Colonic mucosa (tissue), 4 donors: ENCODE measurements at regions of chr16 and their contacts with region 1.

Region 1: GRCh38 chr16:58661199-58661830 is 23.3 kb downstream of the SLC38A7 start:
- DNase-seq: peak; percentile 49
- H3K4me3 ChIP-seq: no peak overlapping the region
- H3K27ac ChIP-seq: no peak overlapping the region
- H3K4me1 ChIP-seq: no peaks in the 10 kb centered on the region
- H3K27me3 ChIP-seq: no peaks in the 10 kb centered on the region
- CTCF ChIP-seq: peak; percentile 51

Region 2: DNA sequence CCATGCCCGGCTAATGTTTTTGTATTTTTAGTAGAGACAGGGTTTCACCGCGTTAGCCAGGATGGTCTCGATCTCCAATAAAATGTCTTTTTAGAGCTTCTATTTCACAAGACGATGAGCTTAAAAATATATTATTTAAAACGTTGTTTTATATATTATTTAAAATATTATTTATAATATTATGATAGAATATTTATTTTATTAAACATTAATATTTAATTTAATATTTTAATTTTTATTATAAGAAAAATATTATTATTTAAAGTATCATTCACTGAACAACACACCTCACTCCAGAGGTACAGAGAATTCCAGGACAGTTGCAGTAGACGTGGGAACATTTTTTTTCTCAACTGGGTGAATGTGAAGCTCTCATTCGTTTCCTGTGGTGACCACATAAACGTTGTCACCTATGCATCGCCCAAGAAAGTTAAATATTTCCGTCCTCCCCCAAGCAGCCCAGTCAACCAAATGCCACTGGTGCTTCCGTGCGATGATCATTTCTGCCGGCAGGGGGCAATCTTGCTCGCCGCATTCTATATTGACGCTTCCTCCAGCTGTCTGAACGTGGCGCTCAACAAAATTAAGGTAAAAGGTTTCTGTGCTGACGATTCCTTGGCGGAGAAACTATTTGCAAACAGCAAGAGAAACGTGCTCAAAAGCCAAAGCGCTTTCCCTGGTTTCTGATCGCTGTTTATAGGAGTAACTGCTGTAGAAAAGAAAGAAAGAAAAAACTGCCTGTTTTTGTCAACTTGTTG is 324.8 kb before region 1 on chr16:
- intact Hi-C with region 1: loop called (anchors 10 kb)
- DNase-seq: peak; percentile 86
- H3K4me3 ChIP-seq: peak overlapping the region; percentile 7
- H3K27ac ChIP-seq: no peak overlapping the region
- H3K4me1 ChIP-seq: no peaks in the 10 kb centered on the region
- H3K27me3 ChIP-seq: no peaks in the 10 kb centered on the region
- CTCF ChIP-seq: peak; percentile 90

Region 3: GRCh38 chr16:58392215-58393137 is 268.8 kb before region 1 on chr16 and contains the start of gene GINS3:
- intact Hi-C with region 1: no loop called
- DNase-seq: peak; percentile 93
- H3K4me3 ChIP-seq: peak within 1 kb of the TSS; percentile 99
- H3K27ac ChIP-seq: peak within 1 kb of the TSS; percentile 70
- H3K4me1 ChIP-seq: no peaks in the 10 kb centered on the region
- H3K27me3 ChIP-seq: no peaks in the 10 kb centered on the region
- CTCF ChIP-seq: no peak
- total RNA-seq, gene GINS3: 2.5 to 11.7 TPM

Region 4: DNA sequence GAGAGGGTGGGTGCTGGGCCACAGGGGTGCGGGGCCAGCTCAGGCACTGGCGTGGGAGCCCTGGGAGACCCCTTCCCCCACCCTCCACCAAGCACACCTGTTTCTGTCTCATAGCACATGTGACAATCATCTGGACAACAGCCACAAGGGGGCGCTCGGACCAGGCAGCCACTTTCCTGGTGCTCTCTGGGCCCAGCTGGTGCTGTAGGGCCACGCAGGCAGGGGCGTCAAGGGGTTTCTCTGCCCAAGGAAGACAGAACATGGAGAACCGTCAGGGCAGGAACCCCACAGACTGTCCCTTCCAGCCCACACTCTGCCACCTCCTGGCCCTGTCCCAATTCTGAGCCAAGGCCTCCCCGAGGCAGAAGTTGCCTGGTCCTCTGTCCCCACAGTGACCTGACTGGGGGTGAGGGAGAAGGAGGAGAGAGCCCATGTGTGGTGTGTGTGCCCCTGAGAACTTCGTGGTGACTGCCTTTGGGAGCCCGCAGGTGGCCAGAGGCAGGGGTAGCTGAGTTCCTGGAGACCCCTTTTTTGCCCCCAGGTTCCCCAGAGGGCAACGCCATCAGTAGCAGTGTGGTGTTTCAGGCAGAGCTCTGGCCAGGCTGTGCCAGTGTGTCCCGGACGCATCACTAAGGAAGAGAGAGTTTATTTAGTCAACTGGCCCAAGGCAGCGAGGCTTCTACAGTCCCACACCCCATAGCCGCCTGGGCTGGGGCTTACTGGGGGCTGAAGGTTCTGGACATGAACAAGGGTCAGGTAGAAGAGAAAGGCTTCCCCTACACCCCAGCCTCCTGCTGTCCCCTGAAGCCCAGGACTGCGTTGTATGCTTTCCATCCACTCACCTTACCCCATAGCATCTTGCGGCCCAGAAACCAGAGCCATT is 149.1 kb before region 1 on chr16:
- intact Hi-C with region 1: loop called (anchors 5 kb)
- DNase-seq: peak; percentile 84
- H3K4me3 ChIP-seq: no peak overlapping the region
- H3K27ac ChIP-seq: no peak overlapping the region
- H3K4me1 ChIP-seq: peaks cover 3% of the 10 kb centered on the region
- H3K27me3 ChIP-seq: no peaks in the 10 kb centered on the region
- CTCF ChIP-seq: peak; percentile 75

Region 5: GRCh38 chr16:58814348-58814801 is 153.1 kb after region 1 on chr16:
- intact Hi-C with region 1: no loop called
- DNase-seq: peak; percentile 19
- H3K4me3 ChIP-seq: no peak overlapping the region
- H3K27ac ChIP-seq: no peak overlapping the region
- H3K4me1 ChIP-seq: no peaks in the 10 kb centered on the region
- H3K27me3 ChIP-seq: no peaks in the 10 kb centered on the region
- CTCF ChIP-seq: peak; percentile 80